WTC11 (cell line): ENCODE measurements at regions of chr7 and their contacts with region 1.

Region 1: DNA sequence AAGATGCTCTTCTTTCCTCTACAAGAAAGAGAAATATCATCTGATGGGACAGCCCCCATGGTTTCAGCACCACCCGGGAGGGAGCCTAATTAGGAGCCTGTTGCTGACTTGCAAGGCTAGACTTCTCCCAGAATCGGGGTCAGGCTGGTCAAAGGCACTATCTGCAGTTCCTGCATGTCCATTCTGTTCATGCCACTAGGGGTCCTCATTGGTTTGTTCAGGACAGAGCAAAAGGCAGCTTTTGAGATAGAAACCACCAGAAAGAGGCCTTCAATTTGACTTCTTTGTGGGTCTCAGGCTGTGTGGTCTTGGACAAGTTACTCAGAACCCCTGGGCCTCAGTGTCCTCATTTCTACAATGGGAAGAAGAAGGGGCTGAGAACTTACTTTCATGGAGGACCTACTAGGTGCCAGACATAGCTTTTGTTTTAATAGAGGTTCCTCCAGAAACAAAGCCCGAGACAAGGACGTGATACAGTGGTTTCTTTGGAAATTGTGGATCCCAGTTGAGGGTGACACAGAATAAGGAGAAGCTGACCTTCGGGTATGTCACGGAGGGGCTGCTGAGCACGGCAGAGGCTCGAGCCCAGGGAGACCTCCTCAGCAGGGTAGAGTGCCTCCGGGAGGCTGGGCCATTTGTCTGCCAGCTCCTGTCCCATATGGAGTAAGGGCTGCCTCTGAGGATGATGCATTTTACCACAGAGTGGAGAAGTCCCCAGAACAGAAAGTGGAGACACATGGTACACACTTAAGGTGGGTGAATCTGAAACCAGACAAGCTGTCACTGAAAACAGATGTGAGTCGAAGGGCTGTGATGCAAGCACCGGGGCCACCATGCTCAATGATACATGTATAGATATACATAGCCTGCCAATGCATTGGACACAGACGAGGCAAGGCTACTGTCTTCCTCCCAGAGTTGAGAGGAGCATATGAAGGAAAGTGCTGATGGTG is 33.1 kb upstream of the NEUROD6 start:
- DNase-seq: peak; percentile 74
- ATAC-seq: peak; percentile 85
- H3K4me3 Mint-ChIP-seq: no peak overlapping the region
- H3K27ac Mint-ChIP-seq: no peak overlapping the region
- H3K4me1 Mint-ChIP-seq: peaks cover 44% of the 10 kb centered on the region
- H3K27me3 Mint-ChIP-seq: peaks cover 66% of the 10 kb centered on the region
- CTCF ChIP-seq: peak; percentile 67

Region 2: GRCh38 chr7:31290601-31291000 is 83.0 kb before region 1 on chr7:
- CTCF ChIA-PET with region 1: no interaction called
- POLR2A ChIA-PET with region 1: no interaction called
- DNase-seq: no peak
- ATAC-seq: no peak
- H3K4me3 Mint-ChIP-seq: no peak overlapping the region
- H3K27ac Mint-ChIP-seq: no peak overlapping the region
- H3K4me1 Mint-ChIP-seq: peaks cover 7% of the 10 kb centered on the region; the same call in 1 of the 2 replicates
- H3K27me3 Mint-ChIP-seq: no peaks in the 10 kb centered on the region
- CTCF ChIP-seq: no peak

Region 3: DNA sequence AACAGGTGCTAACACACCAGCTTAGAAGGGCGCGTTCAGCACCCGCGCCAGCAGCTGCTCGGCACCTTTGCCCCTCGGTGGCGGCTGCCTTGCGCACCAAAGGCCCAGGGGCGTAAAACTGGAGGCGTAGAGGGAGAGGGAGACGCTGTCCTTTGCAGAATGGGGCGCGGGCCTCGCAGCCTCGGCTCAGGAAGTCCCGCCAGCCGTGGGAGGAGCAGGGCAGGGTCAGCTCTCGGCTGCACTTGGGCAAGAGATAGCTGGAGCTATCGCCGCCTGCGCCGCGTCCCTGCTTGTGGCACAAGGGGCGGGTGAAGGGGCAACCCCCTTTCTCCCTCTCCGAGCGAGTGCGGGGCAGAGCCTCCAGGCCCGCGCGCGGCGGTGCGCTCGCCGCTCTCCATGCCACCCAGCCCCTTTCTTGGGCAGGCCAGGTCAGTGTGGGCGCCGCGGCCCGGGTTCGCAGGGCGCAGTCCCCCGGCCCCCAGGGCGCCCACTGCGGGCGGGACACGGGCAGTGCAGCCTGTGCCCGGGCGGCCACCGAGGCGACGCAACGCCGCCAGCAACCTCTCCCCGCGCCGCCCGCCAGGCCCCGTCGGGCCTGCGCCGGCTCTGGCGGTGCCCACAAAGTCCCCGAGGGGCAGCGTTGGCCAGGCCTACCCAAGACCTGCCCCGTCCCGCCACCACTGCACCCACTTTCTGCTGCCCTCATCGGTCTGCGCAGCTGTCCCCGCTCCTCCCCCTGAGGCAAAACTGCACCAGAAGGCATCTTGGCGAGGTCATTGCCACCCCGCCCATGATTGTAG is 37.2 kb before region 1 on chr7:
- CTCF ChIA-PET with region 1: interaction called, 22 read pairs
- POLR2A ChIA-PET with region 1: no interaction called
- DNase-seq: peak; percentile 66
- ATAC-seq: peak; percentile 87
- H3K4me3 Mint-ChIP-seq: peak overlapping the region; percentile 74
- H3K27ac Mint-ChIP-seq: no peak overlapping the region
- H3K4me1 Mint-ChIP-seq: 0 out of 2 replicates have a peak, but pooled peaks cover 2% of the 10 kb centered on the region
- H3K27me3 Mint-ChIP-seq: peaks cover 62% of the 10 kb centered on the region
- CTCF ChIP-seq: peak; percentile 69

Region 4: DNA sequence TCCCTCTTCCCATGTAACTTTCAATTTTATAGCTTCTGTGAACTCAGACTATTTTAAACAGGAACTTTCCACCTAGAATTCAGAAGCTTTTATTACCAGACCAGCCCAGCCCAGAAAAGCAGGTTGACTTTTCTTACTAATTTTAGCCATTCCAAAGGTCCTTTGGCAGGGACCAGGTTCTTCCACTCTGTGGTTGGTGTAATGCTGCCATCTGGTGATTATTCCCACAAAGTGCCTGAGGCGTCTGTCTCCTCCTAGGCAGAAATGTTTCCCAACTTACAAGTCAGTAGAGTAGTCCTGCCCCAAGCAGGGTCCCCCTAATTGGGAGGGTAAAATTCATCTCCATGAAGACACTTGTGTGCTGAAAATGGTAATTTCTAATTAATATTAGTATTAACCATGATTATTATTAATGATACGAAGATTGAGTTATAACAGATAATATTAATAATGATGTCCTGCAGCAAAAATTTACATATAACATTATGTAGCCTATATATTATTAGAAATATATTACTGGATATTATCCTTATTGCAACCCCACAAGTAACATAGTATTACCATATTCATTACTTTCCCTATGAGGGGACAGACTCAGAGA is 260.4 kb after region 1 on chr7:
- CTCF ChIA-PET with region 1: interaction called, 42 read pairs
- POLR2A ChIA-PET with region 1: no interaction called
- DNase-seq: peak; percentile 67
- ATAC-seq: peak; percentile 95
- H3K4me3 Mint-ChIP-seq: no peak overlapping the region
- H3K27ac Mint-ChIP-seq: no peak overlapping the region
- H3K4me1 Mint-ChIP-seq: peaks cover 5% of the 10 kb centered on the region
- H3K27me3 Mint-ChIP-seq: peaks cover 3% of the 10 kb centered on the region; the same call in 1 of the 2 replicates
- CTCF ChIP-seq: peak; percentile 41